ENCODE measurements at regions of chr14 and their contacts with region 1.

Region 1: GRCh38 chr14:23910101-23910875 is 43.3 kb upstream of the DHRS4 start:
- DNase-seq: peak in 2 of 9 donors; percentile 2 to 4
- ATAC-seq: peak; percentile 45
- H3K4me3 ChIP-seq: no peak overlapping the region
- H3K4me3 Mint-ChIP-seq: no peak overlapping the region
- H3K27ac ChIP-seq: no peak overlapping the region
- H3K27ac Mint-ChIP-seq: no peak overlapping the region
- H3K4me1 ChIP-seq: no peaks in the 10 kb centered on the region
- H3K4me1 Mint-ChIP-seq: peaks cover 0 to 1% (median 0%) of the 10 kb centered on the region in 7 donors
- H3K27me3 ChIP-seq: no peaks in the 10 kb centered on the region
- H3K27me3 Mint-ChIP-seq: peaks cover 8 to 39% (median 20%) of the 10 kb centered on the region in 5 donors

Region 2: DNA sequence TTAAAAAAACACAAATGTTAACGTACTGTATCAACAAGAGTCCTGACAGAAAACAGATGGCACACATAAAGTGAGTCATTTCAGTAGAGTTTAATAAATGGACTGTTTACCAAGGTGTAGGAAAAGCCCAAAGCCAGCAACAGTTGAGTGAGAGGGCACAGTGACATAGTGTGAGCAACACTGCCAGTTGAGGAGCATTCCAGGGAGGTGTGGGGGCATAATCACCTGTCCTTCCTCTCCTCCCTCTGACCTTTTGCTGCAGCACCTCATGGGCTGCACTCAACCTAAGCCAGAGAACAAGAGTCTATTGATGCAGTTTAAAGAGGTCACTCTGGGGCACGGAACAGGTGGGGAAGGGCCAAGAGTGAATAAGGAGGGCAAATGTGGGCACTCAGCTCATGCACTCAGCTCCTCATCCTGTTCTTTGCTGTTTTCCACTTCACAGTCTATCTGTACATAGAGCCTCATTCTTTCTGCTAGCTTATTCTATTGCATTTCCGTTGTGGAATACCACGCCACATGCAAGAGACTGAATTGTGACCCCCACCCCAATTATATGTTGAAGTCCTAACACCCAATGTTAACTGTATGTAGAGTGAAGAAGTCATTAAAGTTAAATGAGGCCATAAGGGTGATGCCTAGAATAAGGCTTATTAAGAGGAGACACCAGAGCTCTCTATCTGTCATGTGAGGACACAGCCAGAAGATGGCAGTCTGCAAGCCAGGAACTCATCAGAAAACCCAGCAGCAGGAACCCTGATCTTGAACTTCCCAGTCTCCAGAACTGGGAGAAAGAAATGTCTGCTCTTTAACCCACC is 244.7 kb before region 1 on chr14:
- CTCF ChIA-PET with region 1: no interaction called
- POLR2A ChIA-PET with region 1: no interaction called
- intact Hi-C with region 1: loop called in 1 of 2 experiments (anchors 10 kb)
- DNase-seq: peak in 5 of 9 donors; percentile 1 to 25 (median 17)
- ATAC-seq: no peak
- H3K4me3 ChIP-seq: no peak overlapping the region
- H3K4me3 Mint-ChIP-seq: no peak overlapping the region
- H3K27ac ChIP-seq: no peak overlapping the region
- H3K27ac Mint-ChIP-seq: no peak overlapping the region
- H3K4me1 ChIP-seq: peaks cover 0 to 7% of the 10 kb centered on the region in 2 donors
- H3K4me1 Mint-ChIP-seq: peaks cover 0 to 4% (median 0%) of the 10 kb centered on the region in 7 donors
- H3K27me3 ChIP-seq: no peaks in the 10 kb centered on the region
- H3K27me3 Mint-ChIP-seq: peaks cover 0 to 4% (median under 1%) of the 10 kb centered on the region in 5 donors

Region 3: DNA sequence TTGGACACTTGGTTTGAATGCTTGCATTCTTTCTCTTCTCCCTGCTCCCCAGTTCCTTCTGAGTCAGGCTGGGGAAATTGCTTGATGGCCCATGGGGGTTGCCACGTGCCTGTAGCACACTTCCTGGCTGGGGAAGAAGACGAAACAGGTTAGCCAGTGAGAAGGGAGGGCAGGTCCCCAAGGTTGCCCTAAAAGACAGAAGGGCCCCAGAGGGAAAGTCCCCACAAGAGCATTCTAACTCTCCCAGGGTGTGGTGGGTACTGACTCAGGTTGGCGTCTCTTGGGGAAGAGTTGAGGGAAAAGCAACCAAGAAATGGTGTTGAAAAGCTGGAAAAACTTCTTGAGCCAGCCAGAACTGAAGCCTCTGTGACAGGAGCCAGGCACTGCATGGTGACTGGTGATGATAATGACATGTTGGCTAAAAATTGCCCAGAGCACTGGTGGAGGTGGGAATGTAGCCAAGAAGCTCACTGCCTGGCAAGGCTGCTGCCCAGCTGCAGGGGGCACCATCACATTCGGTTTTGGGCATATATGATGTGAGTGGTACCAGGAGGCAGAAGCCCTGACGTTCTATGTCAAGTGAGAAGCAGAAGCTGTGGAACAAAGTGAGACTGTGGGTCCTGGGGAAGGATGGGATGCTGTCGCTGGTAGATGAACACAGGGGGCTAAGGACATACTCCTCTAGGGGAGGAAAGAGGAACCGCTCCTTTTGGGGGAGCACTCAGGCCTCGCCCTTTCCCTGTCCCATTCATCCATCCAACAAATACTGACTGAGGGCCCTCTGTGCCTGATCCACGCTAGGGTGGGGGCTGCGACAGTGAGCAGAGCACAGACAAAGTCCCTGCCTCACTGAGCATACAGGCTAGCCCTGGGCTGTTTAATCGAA is 369.3 kb after region 1 on chr14:
- CTCF ChIA-PET with region 1: no interaction called
- POLR2A ChIA-PET with region 1: no interaction called
- intact Hi-C with region 1: no loop called
- DNase-seq: peak; percentile 17 to 69 (median 41)
- ATAC-seq: peak; percentile 85
- H3K4me3 ChIP-seq: no peak overlapping the region
- H3K4me3 Mint-ChIP-seq: peak overlapping the region in 9 of 10 donors; percentile 12 to 54 (median 34)
- H3K27ac ChIP-seq: peak overlapping the region; percentile 56
- H3K27ac Mint-ChIP-seq: peak overlapping the region; percentile 65 to 91 (median 76)
- H3K4me1 ChIP-seq: peaks cover 6 to 15% of the 10 kb centered on the region in 2 donors
- H3K4me1 Mint-ChIP-seq: peaks cover 29 to 41% (median 36%) of the 10 kb centered on the region in 7 donors
- H3K27me3 ChIP-seq: no peaks in the 10 kb centered on the region
- H3K27me3 Mint-ChIP-seq: no peaks in the 10 kb centered on the region